K562 (cell line): ENCODE measurements at regions of chr11 and their contacts with region 1.

Region 1: DNA sequence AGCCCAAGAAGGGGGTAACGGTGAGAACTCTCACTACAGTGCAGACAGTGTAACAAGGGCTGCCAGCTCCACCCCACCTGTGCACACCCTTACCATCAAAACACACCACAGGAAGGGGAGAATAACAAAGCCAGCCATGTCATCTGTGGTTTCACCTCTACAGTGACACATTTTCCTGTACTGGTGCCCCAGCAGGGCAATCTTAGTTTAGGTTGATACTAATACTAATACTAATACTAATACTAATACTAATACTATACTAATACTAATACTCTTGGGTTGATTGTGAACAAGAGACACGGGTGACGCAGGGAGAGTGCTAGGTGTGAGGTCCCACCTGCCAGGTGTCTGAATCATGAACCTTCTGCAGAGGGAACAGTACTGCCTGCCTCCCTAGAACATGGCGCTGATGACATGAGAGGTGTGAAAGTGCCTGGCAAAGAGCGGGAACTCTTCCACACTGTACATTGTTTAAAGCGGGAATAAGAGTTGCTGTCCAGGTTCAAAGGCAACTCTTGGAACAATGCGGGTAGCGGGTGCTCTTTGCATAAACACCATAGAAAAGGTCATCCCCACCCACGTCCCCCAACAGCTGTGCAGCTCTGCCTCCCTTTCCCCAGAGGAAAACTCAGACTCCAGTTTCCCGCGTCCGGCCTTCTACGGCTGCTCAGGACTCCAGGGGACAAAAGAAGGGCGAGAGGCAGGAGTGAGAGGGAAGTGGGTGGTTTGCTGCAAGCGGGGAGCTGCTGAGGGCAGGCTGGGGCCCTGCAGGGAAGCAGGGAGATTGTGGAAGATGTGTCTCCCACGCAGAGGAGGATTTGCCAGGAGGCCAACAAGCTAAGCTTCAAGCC is 25.0 kb upstream of the TMPRSS4 start:
- DNase-seq: no peak
- ATAC-seq: peak; percentile 4; the same call in 1 of the 3 replicates
- H3K4me3 ChIP-seq: no peak overlapping the region
- H3K27ac ChIP-seq: no peak overlapping the region
- H3K4me1 ChIP-seq: peaks cover 15% of the 10 kb centered on the region in 2 experiments
- H3K27me3 ChIP-seq: peaks cover 5 to 15% of the 10 kb centered on the region in 2 experiments; a peak in 3 of 5 replicates
- CTCF ChIP-seq: no peak
- EP300 ChIP-seq: no peak
- POLR2A ChIP-seq: no peak
- RAD21 ChIP-seq: no peak

Region 2: GRCh38 chr11:117426269-117426685 is 625.6 kb before region 1 on chr11:
- CTCF ChIA-PET with region 1: no interaction called
- POLR2A ChIA-PET with region 1: no interaction called
- in situ Hi-C with region 1: loop called (anchors 10 kb)
- intact Hi-C with region 1: no loop called
- DNase-seq: peak; percentile 76 to 84 (median 82)
- ATAC-seq: peak; percentile 87
- H3K4me3 ChIP-seq: no peak overlapping the region
- H3K27ac ChIP-seq: no peak overlapping the region
- H3K4me1 ChIP-seq: peaks cover 0 to 5% of the 10 kb centered on the region in 2 experiments; a peak in 3 of 5 replicates
- H3K27me3 ChIP-seq: peaks cover 33 to 73% of the 10 kb centered on the region in 2 experiments
- CTCF ChIP-seq: peak; percentile 87 to 97 (median 91)
- EP300 ChIP-seq: no peak
- POLR2A ChIP-seq: no peak
- RAD21 ChIP-seq: peak; percentile 64 to 85

Region 3: DNA sequence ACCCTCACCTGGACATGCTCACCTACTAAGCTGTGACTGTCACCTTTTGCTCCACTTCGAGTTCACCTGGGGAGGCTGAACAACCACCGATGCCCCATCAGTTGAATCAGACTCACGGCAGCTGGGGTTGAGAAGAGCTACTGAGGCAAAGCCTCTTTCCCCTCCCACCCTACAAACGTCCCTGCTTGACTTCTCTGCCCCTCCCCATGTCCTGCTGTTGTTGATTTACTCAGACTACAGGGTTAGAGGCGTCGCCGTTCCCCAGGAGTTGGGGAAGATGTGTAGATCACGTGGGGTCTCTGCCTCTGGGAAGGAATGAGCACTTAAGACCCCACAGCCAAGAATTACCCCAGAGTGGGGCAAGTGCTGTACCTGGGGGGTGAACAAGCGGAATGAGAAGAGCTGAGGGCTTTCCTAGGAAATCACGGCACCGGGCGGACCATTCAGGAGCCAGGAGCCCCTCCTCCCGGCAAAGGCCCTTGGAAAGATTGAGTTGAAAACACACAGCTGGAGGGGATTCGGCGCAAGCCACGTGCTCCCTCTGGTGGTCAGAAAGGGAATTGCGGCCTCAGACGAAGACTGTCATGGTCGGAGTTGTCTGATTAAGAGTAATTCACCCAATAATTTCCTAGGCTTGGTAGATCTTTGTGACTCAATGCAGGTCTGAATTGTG is 234.3 kb before region 1 on chr11:
- CTCF ChIA-PET with region 1: interaction called, 35 read pairs
- POLR2A ChIA-PET with region 1: interaction called, 3 read pairs
- in situ Hi-C with region 1: loop called (anchors 5 kb)
- intact Hi-C with region 1: loop called (anchors 2 kb)
- DNase-seq: peak; percentile 65 to 78 (median 76)
- ATAC-seq: peak; percentile 84
- H3K4me3 ChIP-seq: no peak overlapping the region
- H3K27ac ChIP-seq: no peak overlapping the region
- H3K4me1 ChIP-seq: peaks cover 0 to 30% of the 10 kb centered on the region in 2 experiments; a peak in 3 of 5 replicates
- H3K27me3 ChIP-seq: peaks cover 3 to 13% of the 10 kb centered on the region in 2 experiments; a peak in 3 of 5 replicates
- CTCF ChIP-seq: peak; percentile 86 to 99 (median 97)
- EP300 ChIP-seq: no peak
- POLR2A ChIP-seq: no peak
- RAD21 ChIP-seq: peak; percentile 75 to 88

Region 4: GRCh38 chr11:117907251-117907981 is 144.4 kb before region 1 on chr11:
- CTCF ChIA-PET with region 1: no interaction called
- POLR2A ChIA-PET with region 1: interaction called, 3 read pairs
- in situ Hi-C with region 1: no loop called
- intact Hi-C with region 1: loop called (anchors 5 kb)
- DNase-seq: peak; percentile 95 to 98 (median 97)
- ATAC-seq: peak; percentile 94
- H3K4me3 ChIP-seq: peak overlapping the region; percentile 44
- H3K27ac ChIP-seq: peak overlapping the region; percentile 84
- H3K4me1 ChIP-seq: peaks cover 35 to 36% of the 10 kb centered on the region in 2 experiments; a peak in 4 of 5 replicates
- H3K27me3 ChIP-seq: peaks cover under 1% of the 10 kb centered on the region in 2 experiments; a peak in 2 of 5 replicates
- CTCF ChIP-seq: 0 out of 6 replicates have a peak, but pooled peaks of 1 of the 3 experiments have one; percentile 1
- EP300 ChIP-seq: peak; percentile 60; the same call in 1 of the 2 replicates
- POLR2A ChIP-seq: peak; percentile 92
- RAD21 ChIP-seq: no peak

Region 5: DNA sequence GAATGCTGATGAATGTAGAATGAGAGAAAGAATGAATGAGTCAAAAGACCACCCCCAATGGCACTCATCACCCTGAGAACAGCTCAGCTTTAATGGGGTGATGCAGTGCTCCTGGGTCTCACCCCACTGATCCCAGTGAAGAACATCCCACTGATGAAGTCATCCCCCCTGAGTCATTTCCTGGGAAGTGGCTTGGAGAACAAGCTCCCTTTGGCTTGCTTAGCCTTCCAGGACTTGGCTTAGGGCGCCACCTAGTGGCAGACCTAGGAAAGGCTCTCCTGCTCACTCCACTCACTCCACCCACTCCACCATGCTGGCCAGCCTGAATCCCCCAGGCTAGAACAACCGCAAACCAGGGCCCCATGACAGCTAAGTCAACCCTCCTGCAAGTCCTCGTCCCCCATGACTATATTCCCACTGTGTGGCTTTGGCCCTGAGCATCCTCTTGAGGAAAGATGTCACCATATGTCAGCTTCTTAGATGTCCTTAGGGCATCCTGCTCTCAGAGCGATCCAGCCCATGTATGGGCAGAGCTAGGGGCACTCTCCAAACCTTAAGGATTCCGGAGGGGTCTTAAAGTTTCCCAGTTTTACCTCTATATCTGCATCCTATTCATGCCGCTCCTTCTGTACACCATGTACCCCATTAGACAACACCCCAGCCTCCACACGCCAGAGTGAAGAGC is 104.9 kb before region 1 on chr11:
- CTCF ChIA-PET with region 1: interaction called, 16 read pairs
- POLR2A ChIA-PET with region 1: interaction called, 7 read pairs
- in situ Hi-C with region 1: loop called (anchors 5 kb)
- intact Hi-C with region 1: loop called (anchors 1 kb)
- DNase-seq: peak; percentile 83 to 92 (median 90)
- ATAC-seq: peak; percentile 94
- H3K4me3 ChIP-seq: no peak overlapping the region
- H3K27ac ChIP-seq: no peak overlapping the region
- H3K4me1 ChIP-seq: peaks cover 20 to 41% of the 10 kb centered on the region in 2 experiments
- H3K27me3 ChIP-seq: no peaks in the 10 kb centered on the region
- CTCF ChIP-seq: peak; percentile 90 to 97 (median 96)
- EP300 ChIP-seq: peak; percentile 42; the same call in 1 of the 2 replicates
- POLR2A ChIP-seq: no peak
- RAD21 ChIP-seq: peak; percentile 93 to 96

Region 6: DNA sequence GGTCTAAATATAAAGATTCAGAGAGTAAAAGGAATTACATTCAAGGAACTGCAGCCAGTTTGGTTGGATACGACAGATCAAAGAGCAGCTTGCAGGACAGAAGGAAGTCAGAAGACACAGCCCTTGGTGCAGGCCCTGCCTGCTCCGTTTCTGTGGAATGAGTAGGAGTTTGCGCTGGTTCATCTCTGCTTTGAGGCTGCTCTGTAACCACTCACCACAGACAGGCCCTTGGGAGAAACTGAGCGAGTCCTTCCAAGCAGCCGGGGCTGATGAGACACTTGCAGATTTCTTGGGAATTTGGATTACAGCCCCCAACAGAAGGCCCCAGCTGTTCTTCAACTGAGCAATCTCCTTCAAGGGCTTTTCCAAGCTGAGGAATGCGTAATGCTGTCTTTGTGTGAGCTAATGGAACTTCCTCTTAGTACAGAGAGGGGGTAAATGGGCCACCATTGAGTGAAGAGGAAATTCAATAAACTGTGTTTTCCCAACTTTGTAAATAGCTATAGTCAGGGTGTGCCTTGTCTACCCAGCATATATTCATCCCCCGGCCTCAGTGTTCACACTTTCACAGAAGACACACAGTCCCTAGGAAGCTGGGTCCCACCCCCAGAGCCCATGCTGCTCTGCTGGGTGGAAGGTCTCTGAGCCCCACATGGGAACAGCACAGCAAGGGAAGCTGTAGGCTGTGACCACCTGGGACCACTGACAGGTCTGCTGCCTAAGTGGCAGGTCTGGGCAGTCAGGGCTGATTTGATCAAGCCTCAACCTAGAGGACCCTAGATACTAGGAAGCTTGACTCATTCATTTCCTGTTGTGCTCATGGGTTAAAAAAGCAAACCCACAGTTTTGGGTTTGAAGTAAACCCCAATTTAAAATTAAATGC is 49.1 kb before region 1 on chr11:
- CTCF ChIA-PET with region 1: no interaction called
- POLR2A ChIA-PET with region 1: interaction called, 3 read pairs
- in situ Hi-C with region 1: no loop called
- intact Hi-C with region 1: loop called (anchors 2 kb)
- DNase-seq: peak; percentile 33 to 79 (median 51)
- ATAC-seq: peak; percentile 72
- H3K4me3 ChIP-seq: no peak overlapping the region
- H3K27ac ChIP-seq: peak overlapping the region; percentile 90
- H3K4me1 ChIP-seq: peaks cover 71 to 74% of the 10 kb centered on the region in 2 experiments
- H3K27me3 ChIP-seq: no peaks in the 10 kb centered on the region
- CTCF ChIP-seq: no peak
- EP300 ChIP-seq: no peak; the same call in 1 of the 2 replicates
- POLR2A ChIP-seq: peak; percentile 56; the same call in 1 of the 2 replicates
- RAD21 ChIP-seq: no peak

Region 7: DNA sequence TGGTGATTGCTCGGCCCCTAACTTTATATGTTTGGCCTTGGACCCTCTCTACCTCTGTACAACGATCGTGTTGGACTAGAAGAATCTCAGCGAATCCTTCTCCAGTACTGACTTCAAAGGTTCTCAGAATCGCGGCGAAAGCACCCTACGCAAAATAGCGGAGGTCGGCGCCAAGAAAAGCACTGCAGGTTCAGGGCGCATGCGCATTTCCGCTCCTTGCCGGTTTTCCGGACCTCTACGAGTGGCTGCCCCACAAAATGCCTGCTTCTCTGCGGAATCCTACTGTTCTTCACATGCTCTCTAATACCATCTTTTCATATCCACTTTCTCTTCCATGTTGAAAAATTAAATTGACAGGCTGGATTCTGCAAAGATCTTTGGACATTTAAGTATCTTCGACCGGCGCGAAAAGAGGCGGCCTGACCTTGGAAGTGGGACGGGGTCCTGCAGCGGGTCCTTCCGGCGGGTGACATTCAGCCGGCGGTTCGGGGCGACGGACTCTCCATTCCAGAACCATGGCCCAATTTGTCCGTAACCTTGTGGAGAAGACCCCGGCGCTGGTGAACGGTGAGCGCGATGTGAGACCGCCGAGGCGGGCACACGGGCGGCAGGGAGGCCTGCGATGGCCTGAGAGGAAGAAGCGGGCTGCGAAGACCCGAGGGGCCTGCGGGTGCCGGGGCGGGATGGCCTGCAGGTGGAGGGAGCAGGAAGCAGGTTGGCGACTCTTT is 349.5 kb after region 1 on chr11 and contains the start of gene ATP5MG:
- CTCF ChIA-PET with region 1: no interaction called
- POLR2A ChIA-PET with region 1: no interaction called
- in situ Hi-C with region 1: no loop called
- intact Hi-C with region 1: no loop called
- DNase-seq: peak; percentile 90 to 94 (median 91)
- ATAC-seq: peak; percentile 82
- H3K4me3 ChIP-seq: peak within 1 kb of the TSS; percentile 95
- H3K27ac ChIP-seq: peak within 1 kb of the TSS; percentile 96
- H3K4me1 ChIP-seq: peaks cover 15 to 17% of the 10 kb centered on the region in 2 experiments; a peak in 4 of 5 replicates
- H3K27me3 ChIP-seq: no peaks in the 10 kb centered on the region
- CTCF ChIP-seq: peak in 2 of 3 experiments; percentile 1 to 8; a peak in 1 of 6 replicates
- EP300 ChIP-seq: no peak
- POLR2A ChIP-seq: peak; percentile 84
- RAD21 ChIP-seq: no peak; a peak in 1 of 4 replicates
- polyA plus RNA-seq, gene ATP5MG: 1,842 to 2,138 TPM